ENCODE measurements at regions of chr3 and their contacts with region 1.

Region 1: GRCh38 chr3:105938101-105938500 is 69.3 kb upstream of the CBLB start:
- DNase-seq: no peak

Region 2: GRCh38 chr3:106206146-106206545 is 268.0 kb after region 1 on chr3:
- intact Hi-C with region 1: loop called (anchors 10 kb)
- DNase-seq: no peak

Region 3: GRCh38 chr3:106542101-106542769 is 604.1 kb after region 1 on chr3:
- intact Hi-C with region 1: no loop called
- DNase-seq: no peak

Measured in cardiac septum (tissue), 1 donor.